Keratinocyte (primary cell): ENCODE measurements at regions of chr9 and their contacts with region 1.

Region 1: GRCh38 chr9:37592108-37592951 is at the start of gene TOMM5:
- DNase-seq: peak; percentile 45
- H3K4me3 ChIP-seq: peak within 1 kb of the TSS; percentile 93 to 99 (median 94)
- H3K27ac ChIP-seq: peak within 1 kb of the TSS; percentile 93
- H3K4me1 ChIP-seq: peaks cover 17% of the 10 kb centered on the region
- H3K27me3 ChIP-seq: no peaks in the 10 kb centered on the region
- CTCF ChIP-seq: no peak
- polyA plus RNA-seq, gene TOMM5: 175 to 232 TPM (median 193 TPM) in 3 replicates

Region 2: DNA sequence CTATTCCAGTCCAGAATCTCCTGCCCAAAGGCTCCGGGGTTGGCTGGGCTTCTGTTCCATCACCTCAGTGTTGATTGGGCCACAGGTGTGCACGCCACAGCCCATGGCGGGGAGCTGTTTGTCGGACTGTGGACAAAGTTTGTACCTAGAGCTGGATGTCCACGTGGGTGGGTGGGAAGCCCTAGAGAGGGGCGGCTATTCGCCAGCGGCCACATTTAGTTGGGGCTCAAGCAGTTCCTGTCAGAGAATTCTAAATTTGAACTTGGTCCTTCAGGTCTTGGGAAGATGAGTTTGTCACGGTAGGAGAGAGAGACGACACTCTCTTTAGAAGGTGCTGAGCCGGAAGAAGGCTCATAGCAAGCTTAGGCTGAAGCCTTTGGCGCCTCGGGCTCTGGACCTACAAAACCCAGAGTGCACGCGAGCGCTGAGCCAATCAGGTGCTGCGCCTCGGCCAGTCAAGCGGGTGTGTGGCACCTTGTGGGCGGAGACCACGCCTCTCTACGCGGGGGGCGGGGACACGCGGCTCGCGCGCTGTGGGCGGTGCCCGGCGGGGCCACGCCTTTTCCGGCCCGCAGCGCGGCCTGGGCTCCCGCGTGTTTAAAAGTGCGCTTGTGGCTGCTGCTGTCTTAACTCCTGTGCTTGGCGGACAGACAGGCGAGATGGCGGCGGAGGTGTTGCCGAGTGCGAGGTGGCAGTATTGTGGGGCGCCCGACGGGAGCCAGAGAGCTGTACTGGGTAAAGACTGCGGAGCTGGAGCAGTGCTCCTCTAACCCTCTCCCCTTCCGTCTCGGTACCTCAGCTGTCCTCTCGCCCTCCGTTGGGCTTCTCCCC is 106.7 kb before region 1 on chr9 and contains the start of gene POLR1E:
- dilution Hi-C with region 1: loop called (anchors 25 kb)
- DNase-seq: peak; percentile 91
- H3K4me3 ChIP-seq: peak within 1 kb of the TSS; percentile 85 to 88 (median 85)
- H3K27ac ChIP-seq: peak within 1 kb of the TSS; percentile 66
- H3K4me1 ChIP-seq: peaks cover 20% of the 10 kb centered on the region
- H3K27me3 ChIP-seq: no peaks in the 10 kb centered on the region
- CTCF ChIP-seq: no peak
- polyA plus RNA-seq, gene POLR1E: 31.8 to 44.4 TPM (median 39.9 TPM) in 3 replicates

Region 3: GRCh38 chr9:37565661-37566618 is 26.4 kb before region 1 on chr9:
- dilution Hi-C with region 1: no loop called
- DNase-seq: no peak
- H3K4me3 ChIP-seq: no peak overlapping the region
- H3K27ac ChIP-seq: no peak overlapping the region
- H3K4me1 ChIP-seq: peaks cover 3% of the 10 kb centered on the region
- H3K27me3 ChIP-seq: no peaks in the 10 kb centered on the region
- CTCF ChIP-seq: no peak